ENCODE measurements at regions of chr14 and their contacts with region 1.

Region 1: DNA sequence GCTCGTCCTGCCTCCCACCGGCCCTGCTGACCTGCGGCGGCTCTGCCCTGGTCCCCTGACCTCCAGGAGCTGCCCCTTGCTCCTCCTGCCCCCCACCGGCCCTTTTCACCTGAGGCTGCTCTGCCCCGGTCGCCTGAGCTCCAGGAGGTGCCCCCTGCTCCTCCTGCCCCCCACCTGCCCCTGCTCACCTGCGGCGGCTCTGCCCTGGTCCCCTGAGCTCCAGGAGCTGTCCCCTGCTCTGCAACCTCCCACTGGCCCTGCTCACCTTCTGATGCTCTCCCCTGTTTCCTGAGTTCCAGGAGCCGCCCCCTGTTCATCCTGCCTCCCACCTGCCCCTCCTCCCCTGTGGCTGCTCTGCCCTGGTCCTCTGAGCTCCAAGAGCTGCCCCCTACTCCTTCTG is 101.3 kb downstream of the TMEM121 start:
- DNase-seq: no peak
- ATAC-seq: no peak
- H3K4me3 ChIP-seq: no peak overlapping the region
- H3K27ac ChIP-seq: no peak overlapping the region
- H3K4me1 ChIP-seq: peaks cover 6% of the 10 kb centered on the region; the same call in 1 of the 2 replicates
- H3K27me3 ChIP-seq: no peaks in the 10 kb centered on the region
- CTCF ChIP-seq: no peak
- EP300 ChIP-seq: no peak
- POLR2A ChIP-seq: no peak
- RAD21 ChIP-seq: no peak

Region 2: GRCh38 chr14:105275267-105275946 is 352.3 kb before region 1 on chr14:
- CTCF ChIA-PET with region 1: no interaction called
- POLR2A ChIA-PET with region 1: no interaction called
- RAD21 ChIA-PET with region 1: no interaction called
- SMC1A ChIA-PET with region 1: no interaction called
- in situ Hi-C with region 1: no loop called
- intact Hi-C with region 1: no loop called
- DNase-seq: no peak
- ATAC-seq: no peak
- H3K4me3 ChIP-seq: no peak overlapping the region
- H3K27ac ChIP-seq: no peak overlapping the region
- H3K4me1 ChIP-seq: no peaks in the 10 kb centered on the region
- H3K27me3 ChIP-seq: no peaks in the 10 kb centered on the region
- CTCF ChIP-seq: no peak
- EP300 ChIP-seq: no peak
- POLR2A ChIP-seq: no peak
- RAD21 ChIP-seq: no peak

Region 3: DNA sequence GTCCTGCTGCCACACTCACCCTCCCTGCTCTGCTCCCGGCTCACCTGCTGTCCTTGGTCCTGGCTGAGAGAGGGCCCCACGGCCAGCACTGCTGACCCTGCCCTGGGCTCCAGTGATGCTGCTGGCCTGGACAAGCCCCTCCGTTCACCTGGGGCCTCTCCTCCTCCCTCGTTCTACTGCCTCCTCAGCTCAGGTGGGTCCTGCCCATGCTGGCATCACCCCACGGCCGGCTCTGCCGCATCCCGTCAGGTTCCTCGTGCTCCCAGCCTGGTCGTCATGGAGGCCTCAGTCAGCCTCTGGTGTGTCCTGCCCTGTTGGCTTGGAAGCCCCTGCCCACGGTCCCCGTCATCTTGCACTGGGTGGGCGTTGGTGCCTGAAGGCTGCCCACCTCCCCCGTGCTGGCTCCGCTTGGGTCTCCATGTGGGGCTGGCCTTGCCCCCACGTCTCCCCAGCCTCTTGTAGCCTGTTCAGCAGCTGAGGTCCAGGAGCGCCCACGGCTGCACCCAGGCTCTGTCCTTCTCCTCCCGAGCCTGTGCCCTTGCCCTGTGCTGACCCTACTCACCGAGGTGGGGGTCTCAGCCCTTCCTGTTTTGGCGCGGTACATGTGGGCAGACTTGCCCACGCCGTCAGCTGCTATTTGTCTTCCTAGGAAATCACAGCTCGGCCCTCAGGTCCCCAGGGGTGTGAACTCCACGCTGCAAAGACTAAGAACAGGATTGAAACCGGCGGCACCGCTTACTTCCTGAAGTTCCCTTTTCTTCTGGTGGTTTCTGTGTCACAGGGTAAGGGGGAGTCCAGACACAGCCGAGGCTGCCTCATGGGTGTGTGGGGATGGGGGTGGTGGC is 20.3 kb after region 1 on chr14:
- CTCF ChIA-PET with region 1: no interaction called
- POLR2A ChIA-PET with region 1: no interaction called
- RAD21 ChIA-PET with region 1: no interaction called
- SMC1A ChIA-PET with region 1: no interaction called
- in situ Hi-C with region 1: no loop called
- intact Hi-C with region 1: loop called (anchors 1 kb)
- DNase-seq: no peak
- ATAC-seq: peak; percentile 85
- H3K4me3 ChIP-seq: no peak overlapping the region
- H3K27ac ChIP-seq: no peak overlapping the region
- H3K4me1 ChIP-seq: peaks cover 9% of the 10 kb centered on the region
- H3K27me3 ChIP-seq: no peaks in the 10 kb centered on the region; a peak in 2 of 4 replicates
- CTCF ChIP-seq: no peak
- EP300 ChIP-seq: no peak
- POLR2A ChIP-seq: no peak
- RAD21 ChIP-seq: no peak

Region 4: GRCh38 chr14:105739331-105740102 is 111.8 kb after region 1 on chr14:
- CTCF ChIA-PET with region 1: no interaction called
- POLR2A ChIA-PET with region 1: no interaction called
- RAD21 ChIA-PET with region 1: no interaction called
- SMC1A ChIA-PET with region 1: no interaction called
- in situ Hi-C with region 1: no loop called
- intact Hi-C with region 1: loop called (anchors 5 kb)
- DNase-seq: no peak
- ATAC-seq: no peak
- H3K4me3 ChIP-seq: no peak overlapping the region
- H3K27ac ChIP-seq: no peak overlapping the region
- H3K4me1 ChIP-seq: no peaks in the 10 kb centered on the region
- H3K27me3 ChIP-seq: no peaks in the 10 kb centered on the region
- CTCF ChIP-seq: no peak
- EP300 ChIP-seq: no peak
- POLR2A ChIP-seq: no peak
- RAD21 ChIP-seq: no peak